Activated B cell treated with CpG ODN at 0.5 μM for 24 hours (primary cell): ENCODE measurements at regions of chrX and their contacts with region 1.

Region 1: GRCh38 chrX:43750248-43750676 is 94.2 kb downstream of the MAOA start:
- DNase-seq: peak; percentile 12
- ATAC-seq: peak; percentile 74
- H3K4me3 Mint-ChIP-seq: no peak overlapping the region
- H3K27ac Mint-ChIP-seq: no peak overlapping the region
- H3K4me1 Mint-ChIP-seq: peaks cover 3% of the 10 kb centered on the region
- H3K27me3 Mint-ChIP-seq: no peaks in the 10 kb centered on the region
- CTCF ChIP-seq: no peak

Region 2: DNA sequence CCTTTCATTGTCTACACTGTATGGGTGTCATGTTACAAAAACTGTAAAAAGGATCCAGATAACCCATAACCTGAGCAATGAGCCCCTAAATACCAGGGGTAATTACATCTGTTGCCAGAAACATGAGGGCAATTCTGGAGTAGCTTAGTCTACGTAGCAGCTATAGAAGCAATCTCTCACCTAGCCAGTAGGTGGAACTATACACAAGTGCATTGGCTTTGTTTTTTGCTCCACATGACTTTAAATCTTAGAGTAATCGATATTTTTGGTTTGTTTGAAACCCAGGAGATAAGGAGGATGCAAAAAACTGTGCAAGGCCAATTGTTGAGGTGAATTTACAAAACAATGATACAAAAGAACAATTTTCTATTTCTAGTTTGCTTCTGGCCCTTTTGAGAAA is 1968.8 kb before region 1 on chrX:
- CTCF ChIA-PET with region 1: interaction called, 4 read pairs
- POLR2A ChIA-PET with region 1: no interaction called
- intact Hi-C with region 1: loop called (anchors 1 kb)
- DNase-seq: no peak
- ATAC-seq: peak; percentile 21
- H3K4me3 Mint-ChIP-seq: no peak overlapping the region
- H3K27ac Mint-ChIP-seq: no peak overlapping the region
- H3K4me1 Mint-ChIP-seq: peaks cover 9% of the 10 kb centered on the region
- H3K27me3 Mint-ChIP-seq: no peaks in the 10 kb centered on the region
- CTCF ChIP-seq: peak; percentile 55

Region 3: DNA sequence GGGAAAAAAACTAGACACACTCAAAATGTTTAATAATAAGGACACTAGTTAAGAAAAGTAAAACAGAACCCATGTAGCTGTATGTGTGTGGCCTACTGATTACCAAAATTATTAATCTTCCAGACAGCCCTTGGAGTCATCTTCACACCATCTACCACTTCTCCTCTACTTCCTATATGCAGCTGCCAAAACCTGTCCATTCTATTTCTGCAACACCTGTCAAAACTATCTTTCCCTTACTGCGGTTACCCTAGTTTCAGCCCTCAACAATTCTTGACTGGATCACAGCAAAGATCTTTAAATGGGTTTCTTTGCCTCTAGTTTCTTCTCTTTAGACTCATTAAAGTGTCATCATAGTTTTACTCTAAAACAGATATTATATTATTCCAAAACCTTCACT is 1953.7 kb before region 1 on chrX:
- CTCF ChIA-PET with region 1: interaction called, 12 read pairs
- POLR2A ChIA-PET with region 1: no interaction called
- intact Hi-C with region 1: loop called (anchors 1 kb)
- DNase-seq: no peak
- ATAC-seq: no peak
- H3K4me3 Mint-ChIP-seq: no peak overlapping the region
- H3K27ac Mint-ChIP-seq: no peak overlapping the region
- H3K4me1 Mint-ChIP-seq: peaks cover 32% of the 10 kb centered on the region
- H3K27me3 Mint-ChIP-seq: no peaks in the 10 kb centered on the region
- CTCF ChIP-seq: no peak

Region 4: DNA sequence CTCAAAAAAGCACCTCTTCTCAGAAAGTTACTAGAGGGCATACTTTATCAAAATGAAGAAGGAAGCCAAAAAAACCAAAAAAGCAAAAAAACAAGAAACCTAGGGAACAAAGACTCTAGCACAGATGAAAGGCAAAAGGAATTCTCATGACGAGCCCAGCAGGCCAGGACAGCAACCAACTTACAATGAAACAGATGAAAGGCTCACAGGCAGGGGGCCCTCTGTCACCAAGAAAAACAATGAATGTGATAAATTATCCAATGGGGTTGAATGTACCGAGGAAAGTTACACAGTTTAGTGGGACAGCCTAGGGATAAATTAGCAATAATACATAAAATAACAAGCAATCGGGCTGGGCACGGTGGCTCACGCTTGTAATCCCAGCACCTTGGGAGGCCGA is 1947.3 kb before region 1 on chrX:
- CTCF ChIA-PET with region 1: interaction called, 12 read pairs
- POLR2A ChIA-PET with region 1: no interaction called
- intact Hi-C with region 1: loop called (anchors 1 kb)
- DNase-seq: no peak
- ATAC-seq: no peak
- H3K4me3 Mint-ChIP-seq: no peak overlapping the region
- H3K27ac Mint-ChIP-seq: no peak overlapping the region
- H3K4me1 Mint-ChIP-seq: peaks cover 32% of the 10 kb centered on the region
- H3K27me3 Mint-ChIP-seq: no peaks in the 10 kb centered on the region
- CTCF ChIP-seq: no peak

Region 5: GRCh38 chrX:43349363-43349762 is 400.9 kb before region 1 on chrX:
- CTCF ChIA-PET with region 1: no interaction called
- POLR2A ChIA-PET with region 1: no interaction called
- intact Hi-C with region 1: loop called (anchors 2 kb)
- DNase-seq: no peak
- ATAC-seq: no peak
- H3K4me3 Mint-ChIP-seq: no peak overlapping the region
- H3K27ac Mint-ChIP-seq: no peak overlapping the region
- H3K4me1 Mint-ChIP-seq: peaks cover 35% of the 10 kb centered on the region
- H3K27me3 Mint-ChIP-seq: no peaks in the 10 kb centered on the region
- CTCF ChIP-seq: no peak